ENCODE measurements at regions of chr12 and their contacts with region 1.

Region 1: DNA sequence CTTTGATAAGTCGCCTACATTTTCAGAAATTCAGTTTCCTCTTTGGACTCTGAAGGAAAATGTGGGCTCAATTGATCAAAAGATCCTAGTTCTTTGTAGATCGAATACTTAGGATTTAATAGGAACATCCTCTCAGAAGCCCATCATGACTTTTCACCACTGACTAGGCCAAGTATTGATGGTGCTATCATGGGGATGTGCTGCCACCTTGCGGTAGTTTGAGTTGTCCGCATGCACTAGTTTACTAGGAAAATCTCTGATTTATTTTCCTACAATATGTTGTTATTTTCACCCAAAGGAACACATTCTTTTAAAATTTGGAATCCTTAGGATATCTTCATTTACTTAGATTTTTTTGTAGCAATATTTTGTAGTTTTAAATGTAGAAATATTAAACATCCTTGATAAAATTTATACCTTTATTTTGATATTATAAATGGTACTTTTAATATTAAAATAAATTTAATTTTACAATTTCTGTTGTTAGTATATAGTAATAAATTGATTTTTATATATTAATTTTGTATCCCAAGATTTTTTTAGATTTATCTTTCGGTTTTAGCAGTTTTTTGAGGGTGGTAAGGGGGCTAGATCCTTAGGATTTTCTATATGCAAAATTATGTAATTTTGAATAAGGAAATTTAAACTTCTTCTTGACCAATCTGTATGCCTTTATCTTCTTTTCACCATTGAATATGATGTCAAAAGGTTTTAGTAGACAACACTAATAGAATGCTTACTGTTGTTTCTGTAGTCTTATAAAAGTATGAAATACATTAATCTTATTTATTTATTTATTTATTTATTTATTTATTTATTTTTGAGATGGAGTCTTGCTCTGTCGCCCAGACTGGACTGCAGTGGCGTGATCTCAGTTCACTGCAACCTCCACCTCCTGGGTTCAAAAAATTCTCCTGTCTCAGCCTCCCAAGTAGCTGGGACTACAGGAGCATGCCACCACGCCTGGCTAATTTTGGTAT is 52.9 kb upstream of the OR9K2 start:
- DNase-seq: peak; percentile 78
- ATAC-seq: peak; percentile 23; the same call in 1 of the 2 replicates
- H3K4me3 Mint-ChIP-seq: no peak overlapping the region
- H3K27ac Mint-ChIP-seq: no peak overlapping the region
- H3K4me1 Mint-ChIP-seq: peaks cover under 1% of the 10 kb centered on the region
- H3K27me3 Mint-ChIP-seq: no peaks in the 10 kb centered on the region
- CTCF ChIP-seq: peak; percentile 52

Region 2: DNA sequence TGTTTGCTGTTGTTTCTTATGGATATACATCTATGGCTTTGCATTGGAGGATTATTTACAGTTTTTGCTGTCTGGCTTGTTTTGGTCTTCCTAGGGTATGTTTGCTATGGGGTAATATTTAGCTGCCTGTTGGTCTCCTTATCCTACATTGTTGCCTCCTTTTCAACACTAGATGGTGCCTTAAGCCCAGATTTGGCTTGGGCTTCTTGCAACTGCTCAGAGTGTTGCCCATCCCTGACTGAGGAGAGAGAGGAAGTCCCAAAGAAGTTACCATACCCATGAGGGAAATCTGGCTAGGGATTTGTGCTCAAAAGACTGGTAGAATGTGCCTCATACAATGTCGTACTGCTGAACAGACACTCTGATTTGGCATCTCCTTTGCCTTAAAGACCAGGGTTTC is 313.6 kb before region 1 on chr12:
- CTCF ChIA-PET with region 1: interaction called, 32 read pairs
- POLR2A ChIA-PET with region 1: no interaction called
- DNase-seq: peak; percentile 43
- ATAC-seq: peak; percentile 99
- H3K4me3 Mint-ChIP-seq: no peak overlapping the region
- H3K27ac Mint-ChIP-seq: no peak overlapping the region
- H3K4me1 Mint-ChIP-seq: no peaks in the 10 kb centered on the region
- H3K27me3 Mint-ChIP-seq: no peaks in the 10 kb centered on the region
- CTCF ChIP-seq: no peak

Region 3: DNA sequence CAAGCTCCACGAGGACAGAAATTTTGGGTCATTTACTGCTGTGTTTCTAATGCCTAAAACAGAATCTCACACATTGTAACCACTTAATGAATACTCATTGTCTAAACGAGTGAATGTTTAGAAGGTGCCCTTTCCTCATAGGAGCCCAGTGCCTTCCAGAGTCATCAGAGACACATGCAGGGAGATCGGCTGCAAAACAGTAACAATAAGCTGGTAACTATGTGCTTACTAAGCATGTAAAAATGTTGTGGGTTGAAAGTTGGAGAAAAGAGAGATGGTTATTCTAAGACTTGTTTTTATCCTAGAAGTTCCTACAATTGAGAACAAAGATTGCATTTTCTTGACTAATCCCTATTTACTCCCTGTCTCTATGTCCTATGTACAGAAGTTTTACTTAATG is 96.2 kb before region 1 on chr12:
- CTCF ChIA-PET with region 1: interaction called, 44 read pairs
- POLR2A ChIA-PET with region 1: no interaction called
- DNase-seq: no peak
- ATAC-seq: no peak
- H3K4me3 Mint-ChIP-seq: no peak overlapping the region
- H3K27ac Mint-ChIP-seq: no peak overlapping the region
- H3K4me1 Mint-ChIP-seq: peaks cover 18% of the 10 kb centered on the region
- H3K27me3 Mint-ChIP-seq: no peaks in the 10 kb centered on the region
- CTCF ChIP-seq: no peak

Region 4: GRCh38 chr12:54998958-54999510 is 74.3 kb before region 1 on chr12:
- CTCF ChIA-PET with region 1: interaction called, 325 read pairs
- POLR2A ChIA-PET with region 1: interaction called, 3 read pairs
- DNase-seq: no peak
- ATAC-seq: no peak
- H3K4me3 Mint-ChIP-seq: no peak overlapping the region
- H3K27ac Mint-ChIP-seq: no peak overlapping the region
- H3K4me1 Mint-ChIP-seq: peaks cover 48% of the 10 kb centered on the region
- H3K27me3 Mint-ChIP-seq: no peaks in the 10 kb centered on the region
- CTCF ChIP-seq: no peak

Region 5: GRCh38 chr12:55034218-55034617 is 39.1 kb before region 1 on chr12:
- CTCF ChIA-PET with region 1: interaction called, 14 read pairs
- POLR2A ChIA-PET with region 1: no interaction called
- DNase-seq: no peak
- ATAC-seq: peak; percentile 38; the same call in 1 of the 2 replicates
- H3K4me3 Mint-ChIP-seq: no peak overlapping the region
- H3K27ac Mint-ChIP-seq: no peak overlapping the region
- H3K4me1 Mint-ChIP-seq: peaks cover 20% of the 10 kb centered on the region
- H3K27me3 Mint-ChIP-seq: no peaks in the 10 kb centered on the region; the same call in 1 of the 2 replicates
- CTCF ChIP-seq: no peak

Measured in WTC11 (cell line).